ENCODE measurements at regions of chr3 and their contacts with region 1.

Region 1: DNA sequence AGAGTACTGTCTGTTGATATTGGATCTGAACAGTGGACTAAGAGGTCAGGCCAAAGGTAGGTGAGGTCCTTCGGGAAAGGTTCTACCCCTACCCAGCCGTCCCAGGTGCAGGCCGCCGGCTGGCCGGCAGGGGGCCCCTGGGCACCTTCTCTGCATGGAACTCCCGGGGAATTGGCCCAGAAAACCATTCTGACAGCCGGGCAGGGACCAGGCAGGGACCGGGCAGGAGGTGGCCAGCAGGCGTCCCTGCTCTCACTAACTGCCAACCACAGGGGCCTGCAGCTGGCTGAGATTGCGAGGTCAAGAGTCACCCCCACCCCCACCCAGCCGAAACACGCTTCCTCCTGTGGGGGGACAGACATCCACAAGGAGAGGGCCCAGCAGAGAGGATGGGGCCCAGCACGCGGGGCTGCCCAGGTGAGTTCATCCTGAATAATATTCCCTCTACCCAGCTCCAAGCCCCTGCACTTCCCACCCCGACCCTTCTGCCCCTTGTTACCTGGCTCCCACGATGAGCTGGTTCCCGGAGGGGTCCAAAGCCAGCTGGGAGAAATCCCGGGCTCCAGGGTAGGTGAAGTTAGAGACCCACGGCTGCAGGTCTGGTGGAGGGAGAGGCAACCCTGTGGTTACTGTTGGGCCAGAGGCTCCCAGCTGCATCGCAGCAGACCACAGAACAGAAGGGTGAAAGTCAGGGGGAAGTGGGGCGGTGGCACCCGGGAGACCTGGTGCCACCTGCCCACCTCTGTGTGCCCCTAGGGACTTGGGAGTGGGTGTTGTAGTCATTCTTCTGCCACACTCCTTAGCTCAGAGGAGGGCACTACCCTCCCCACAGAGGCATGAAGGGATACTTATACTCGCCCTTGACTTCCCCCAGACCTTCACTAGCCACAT is 84.4 kb downstream of the SEMA5B start:
- DNase-seq: no peak
- ATAC-seq: peak; percentile 88
- H3K4me3 ChIP-seq: no peak overlapping the region
- H3K27ac ChIP-seq: no peak overlapping the region
- H3K4me1 ChIP-seq: no peaks in the 10 kb centered on the region
- H3K27me3 ChIP-seq: peaks cover 0 to 2% of the 10 kb centered on the region in 2 experiments; a peak in 2 of 4 replicates
- CTCF ChIP-seq: peak; percentile 67 to 94 (median 89)
- EP300 ChIP-seq: no peak
- POLR2A ChIP-seq: no peak
- RAD21 ChIP-seq: peak; percentile 72

Region 2: GRCh38 chr3:122406198-122406597 is 537.0 kb before region 1 on chr3:
- CTCF ChIA-PET with region 1: no interaction called
- POLR2A ChIA-PET with region 1: no interaction called
- RAD21 ChIA-PET with region 1: no interaction called
- SMC1A ChIA-PET with region 1: no interaction called
- in situ Hi-C with region 1: no loop called
- intact Hi-C with region 1: no loop called
- DNase-seq: no peak
- ATAC-seq: peak; percentile 68
- H3K4me3 ChIP-seq: no peak overlapping the region
- H3K27ac ChIP-seq: no peak overlapping the region
- H3K4me1 ChIP-seq: no peaks in the 10 kb centered on the region
- H3K27me3 ChIP-seq: no peaks in the 10 kb centered on the region
- CTCF ChIP-seq: no peak
- EP300 ChIP-seq: no peak
- POLR2A ChIP-seq: no peak
- RAD21 ChIP-seq: no peak

Region 3: GRCh38 chr3:122760453-122761271 is 182.5 kb before region 1 on chr3:
- CTCF ChIA-PET with region 1: interaction called, 11 read pairs
- POLR2A ChIA-PET with region 1: no interaction called
- RAD21 ChIA-PET with region 1: interaction called, 5 read pairs
- SMC1A ChIA-PET with region 1: interaction called, 6 read pairs
- in situ Hi-C with region 1: no loop called
- intact Hi-C with region 1: loop called (anchors 10 kb)
- DNase-seq: no peak
- ATAC-seq: no peak
- H3K4me3 ChIP-seq: no peak overlapping the region
- H3K27ac ChIP-seq: no peak overlapping the region
- H3K4me1 ChIP-seq: no peaks in the 10 kb centered on the region
- H3K27me3 ChIP-seq: no peaks in the 10 kb centered on the region
- CTCF ChIP-seq: no peak
- EP300 ChIP-seq: no peak
- POLR2A ChIP-seq: no peak
- RAD21 ChIP-seq: no peak

Region 4: DNA sequence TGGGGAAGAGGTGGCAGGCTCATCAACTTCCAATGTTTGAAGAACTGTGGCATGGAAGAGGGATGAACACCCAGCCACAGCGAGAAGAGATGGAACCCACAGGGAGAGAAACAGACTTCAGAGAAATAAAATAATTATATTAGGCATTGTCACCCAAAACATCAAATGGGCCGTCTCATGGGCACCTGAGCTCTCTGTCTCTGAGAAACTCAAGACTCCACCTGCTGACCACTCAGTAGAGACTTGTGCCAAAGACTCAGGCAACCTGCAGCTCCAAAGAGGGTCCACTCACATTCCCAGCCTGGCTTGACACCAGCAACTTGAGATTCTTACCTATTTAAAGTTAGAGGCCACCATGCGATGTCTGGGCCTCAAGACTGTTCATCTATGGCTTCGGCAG is 72.4 kb after region 1 on chr3:
- CTCF ChIA-PET with region 1: interaction called, 18 read pairs
- POLR2A ChIA-PET with region 1: no interaction called
- RAD21 ChIA-PET with region 1: no interaction called
- SMC1A ChIA-PET with region 1: interaction called, 3 read pairs
- in situ Hi-C with region 1: no loop called
- intact Hi-C with region 1: no loop called
- DNase-seq: no peak
- ATAC-seq: no peak
- H3K4me3 ChIP-seq: no peak overlapping the region
- H3K27ac ChIP-seq: no peak overlapping the region
- H3K4me1 ChIP-seq: no peaks in the 10 kb centered on the region
- H3K27me3 ChIP-seq: peaks cover 3 to 7% of the 10 kb centered on the region in 2 experiments; a peak in 3 of 4 replicates
- CTCF ChIP-seq: peak in 1 of 3 experiments; percentile 22; a peak in 1 of 6 replicates
- EP300 ChIP-seq: no peak
- POLR2A ChIP-seq: no peak
- RAD21 ChIP-seq: 0 out of 2 replicates have a peak, but pooled peaks have one; percentile 12

Region 5: DNA sequence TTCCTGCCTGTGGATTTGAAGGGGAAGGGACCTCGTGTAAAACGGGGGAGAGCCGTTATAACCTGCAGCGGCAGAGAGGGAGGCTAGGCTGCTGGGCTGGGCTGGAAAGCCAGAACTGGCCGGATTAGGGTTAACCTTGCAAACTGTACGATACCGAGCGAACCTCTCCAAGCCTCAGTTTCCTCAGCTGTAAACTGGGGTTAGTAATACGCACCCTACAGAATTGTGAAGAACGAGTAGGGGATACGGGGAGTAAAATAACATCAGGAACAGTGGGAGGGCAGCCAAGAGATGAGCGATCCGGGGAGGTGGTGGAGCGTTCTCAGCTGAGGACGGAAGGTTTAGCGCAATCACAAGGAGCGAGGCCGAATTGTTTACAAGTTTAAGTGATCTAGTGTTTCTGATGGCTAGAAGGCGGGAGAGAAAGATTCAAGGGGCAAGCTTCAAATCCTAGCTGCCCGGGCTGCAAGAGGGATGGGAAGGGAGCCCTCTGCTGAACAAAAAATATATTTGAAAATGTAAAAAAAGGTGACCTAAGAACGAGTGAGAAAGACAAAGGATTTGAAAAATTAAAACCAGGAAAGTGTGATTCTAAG is 85.1 kb after region 1 on chr3:
- CTCF ChIA-PET with region 1: interaction called, 41 read pairs
- POLR2A ChIA-PET with region 1: interaction called, 3 read pairs
- RAD21 ChIA-PET with region 1: interaction called, 32 read pairs
- SMC1A ChIA-PET with region 1: interaction called, 8 read pairs
- in situ Hi-C with region 1: no loop called
- intact Hi-C with region 1: loop called (anchors 1 kb)
- DNase-seq: no peak
- ATAC-seq: peak; percentile 61
- H3K4me3 ChIP-seq: peak overlapping the region; percentile 50; the same call in 1 of the 2 replicates
- H3K27ac ChIP-seq: no peak overlapping the region
- H3K4me1 ChIP-seq: peaks cover 6% of the 10 kb centered on the region
- H3K27me3 ChIP-seq: peaks cover 18 to 33% of the 10 kb centered on the region in 2 experiments
- CTCF ChIP-seq: peak; percentile 35 to 67 (median 37); a peak in 4 of 6 replicates
- EP300 ChIP-seq: no peak
- POLR2A ChIP-seq: no peak
- RAD21 ChIP-seq: peak; percentile 73

Region 6: GRCh38 chr3:123261666-123262065 is 318.5 kb after region 1 on chr3:
- CTCF ChIA-PET with region 1: interaction called, 3 read pairs
- POLR2A ChIA-PET with region 1: no interaction called
- RAD21 ChIA-PET with region 1: no interaction called
- SMC1A ChIA-PET with region 1: interaction called, 3 read pairs
- in situ Hi-C with region 1: no loop called
- intact Hi-C with region 1: loop called (anchors 5 kb)
- DNase-seq: no peak
- ATAC-seq: no peak
- H3K4me3 ChIP-seq: no peak overlapping the region
- H3K27ac ChIP-seq: no peak overlapping the region
- H3K4me1 ChIP-seq: no peaks in the 10 kb centered on the region
- H3K27me3 ChIP-seq: no peaks in the 10 kb centered on the region
- CTCF ChIP-seq: no peak
- EP300 ChIP-seq: no peak
- POLR2A ChIP-seq: no peak
- RAD21 ChIP-seq: no peak

Measured in GM12878 (cell line).